PC-9 (cell line): ENCODE measurements at regions of chr5 and their contacts with region 1.

Region 1: GRCh38 chr5:180291943-180292831 is at the start of gene MAPK9:
- DNase-seq: peak; percentile 60 to 85
- H3K4me3 ChIP-seq: peak within 1 kb of the TSS; percentile 88
- H3K27ac ChIP-seq: 0 out of 2 replicates have a peak within 1 kb of the TSS, but pooled peaks have one; percentile 31
- H3K4me1 ChIP-seq: peaks cover 22% of the 10 kb centered on the region
- H3K27me3 ChIP-seq: no peaks in the 10 kb centered on the region
- CTCF ChIP-seq: no peak
- total RNA-seq, gene MAPK9: 48.8 and 54.0 TPM in 2 replicates

Region 2: DNA sequence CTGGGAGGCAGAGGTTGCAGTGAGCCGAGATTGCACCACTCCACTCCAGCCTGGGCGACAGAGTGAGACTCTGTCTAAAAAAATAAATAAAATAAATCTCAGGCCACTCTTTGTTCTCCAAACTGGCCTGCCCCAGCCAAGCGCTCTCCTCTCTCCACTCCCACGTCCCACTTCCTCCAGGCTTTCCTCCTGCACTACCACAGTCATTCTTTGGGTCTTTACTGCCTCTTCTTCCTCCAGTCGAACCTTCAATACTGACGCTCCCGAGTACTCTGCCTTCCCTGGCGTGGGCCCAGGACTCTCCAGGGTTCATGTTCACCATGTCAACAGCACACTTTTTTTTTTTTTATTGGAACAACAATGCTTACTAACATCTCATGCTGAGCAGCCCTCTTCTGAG is 244.5 kb before region 1 on chr5:
- CTCF ChIA-PET with region 1: no interaction called
- POLR2A ChIA-PET with region 1: no interaction called
- intact Hi-C with region 1: no loop called
- DNase-seq: no peak
- H3K4me3 ChIP-seq: no peak overlapping the region
- H3K27ac ChIP-seq: no peak overlapping the region
- H3K4me1 ChIP-seq: no peaks in the 10 kb centered on the region
- H3K27me3 ChIP-seq: no peaks in the 10 kb centered on the region
- CTCF ChIP-seq: no peak

Region 3: GRCh38 chr5:180090098-180090768 is 202.0 kb before region 1 on chr5:
- CTCF ChIA-PET with region 1: interaction called, 13 read pairs
- POLR2A ChIA-PET with region 1: no interaction called
- intact Hi-C with region 1: no loop called
- DNase-seq: peak in 1 of 2 experiments; percentile 84
- H3K4me3 ChIP-seq: peak overlapping the region; percentile 41; the same call in 1 of the 2 replicates
- H3K27ac ChIP-seq: no peak overlapping the region
- H3K4me1 ChIP-seq: peaks cover 8% of the 10 kb centered on the region
- H3K27me3 ChIP-seq: no peaks in the 10 kb centered on the region
- CTCF ChIP-seq: peak; percentile 82

Region 4: DNA sequence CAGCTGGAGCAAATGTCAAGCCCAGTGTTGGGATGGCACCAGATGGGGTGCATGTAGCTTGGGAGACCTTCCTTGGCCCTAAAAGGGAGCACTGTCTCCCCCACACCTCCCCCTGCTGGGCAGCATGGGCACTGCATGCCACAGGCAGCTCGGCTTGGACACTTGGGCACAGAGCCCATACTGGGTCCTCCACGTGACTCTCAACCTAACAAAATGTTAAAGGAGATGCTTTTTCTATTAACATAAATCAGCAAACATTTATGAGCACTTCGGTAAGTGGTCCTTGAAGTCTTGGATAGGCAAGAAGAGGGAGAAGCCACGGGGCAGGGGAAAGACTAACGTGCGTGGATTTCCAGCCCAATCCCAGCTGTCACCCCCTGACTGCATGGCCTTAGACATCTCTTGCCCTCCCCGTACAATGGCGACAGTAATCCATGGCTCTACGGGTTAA is 23.6 kb after region 1 on chr5:
- CTCF ChIA-PET with region 1: interaction called, 6 read pairs
- POLR2A ChIA-PET with region 1: no interaction called
- intact Hi-C with region 1: loop called (anchors 1 kb)
- DNase-seq: peak; percentile 43 to 73
- H3K4me3 ChIP-seq: no peak overlapping the region
- H3K27ac ChIP-seq: no peak overlapping the region
- H3K4me1 ChIP-seq: no peaks in the 10 kb centered on the region
- H3K27me3 ChIP-seq: no peaks in the 10 kb centered on the region
- CTCF ChIP-seq: peak; percentile 98

Region 5: GRCh38 chr5:180353048-180353979 is 61.1 kb after region 1 on chr5 and contains the start of gene GFPT2:
- CTCF ChIA-PET with region 1: no interaction called
- POLR2A ChIA-PET with region 1: no interaction called
- intact Hi-C with region 1: loop called (anchors 1 kb)
- DNase-seq: peak; percentile 58 to 86
- H3K4me3 ChIP-seq: peak within 1 kb of the TSS; percentile 88
- H3K27ac ChIP-seq: no peak within 1 kb of the TSS
- H3K4me1 ChIP-seq: no peaks in the 10 kb centered on the region; the same call in 1 of the 2 replicates
- H3K27me3 ChIP-seq: no peaks in the 10 kb centered on the region
- CTCF ChIP-seq: no peak
- total RNA-seq, gene GFPT2: 22.5 and 24.4 TPM in 2 replicates

Region 6: DNA sequence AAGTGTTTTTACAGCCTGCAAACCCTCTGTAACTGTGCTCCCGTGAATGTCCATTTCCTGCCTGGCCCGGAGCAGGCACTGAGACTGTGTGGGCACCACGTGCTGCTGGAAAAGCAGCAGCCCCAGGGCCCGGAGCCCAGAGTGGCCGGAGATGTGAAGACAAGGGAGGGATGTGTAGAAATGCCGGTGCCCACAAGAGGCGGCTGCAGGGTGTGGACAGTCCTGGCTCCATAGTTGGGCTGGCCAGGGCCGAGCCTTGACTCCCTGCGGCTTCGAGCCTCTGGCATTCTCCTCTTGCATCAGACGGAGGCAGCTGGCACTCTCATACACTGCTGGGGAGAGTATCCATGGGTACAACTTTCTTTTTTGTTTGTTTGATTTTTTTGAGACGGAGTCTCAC is 74.1 kb after region 1 on chr5:
- CTCF ChIA-PET with region 1: no interaction called
- POLR2A ChIA-PET with region 1: no interaction called
- intact Hi-C with region 1: no loop called
- DNase-seq: no peak
- H3K4me3 ChIP-seq: no peak overlapping the region
- H3K27ac ChIP-seq: no peak overlapping the region
- H3K4me1 ChIP-seq: no peaks in the 10 kb centered on the region
- H3K27me3 ChIP-seq: no peaks in the 10 kb centered on the region
- CTCF ChIP-seq: no peak

Region 7: GRCh38 chr5:180470966-180471582 is 178.9 kb after region 1 on chr5:
- CTCF ChIA-PET with region 1: interaction called, 10 read pairs
- POLR2A ChIA-PET with region 1: interaction called, 16 read pairs
- intact Hi-C with region 1: loop called (anchors 1 kb)
- DNase-seq: peak in 1 of 2 experiments; percentile 63
- H3K4me3 ChIP-seq: no peak overlapping the region
- H3K27ac ChIP-seq: no peak overlapping the region
- H3K4me1 ChIP-seq: no peaks in the 10 kb centered on the region; the same call in 1 of the 2 replicates
- H3K27me3 ChIP-seq: no peaks in the 10 kb centered on the region
- CTCF ChIP-seq: peak; percentile 98

Region 8: DNA sequence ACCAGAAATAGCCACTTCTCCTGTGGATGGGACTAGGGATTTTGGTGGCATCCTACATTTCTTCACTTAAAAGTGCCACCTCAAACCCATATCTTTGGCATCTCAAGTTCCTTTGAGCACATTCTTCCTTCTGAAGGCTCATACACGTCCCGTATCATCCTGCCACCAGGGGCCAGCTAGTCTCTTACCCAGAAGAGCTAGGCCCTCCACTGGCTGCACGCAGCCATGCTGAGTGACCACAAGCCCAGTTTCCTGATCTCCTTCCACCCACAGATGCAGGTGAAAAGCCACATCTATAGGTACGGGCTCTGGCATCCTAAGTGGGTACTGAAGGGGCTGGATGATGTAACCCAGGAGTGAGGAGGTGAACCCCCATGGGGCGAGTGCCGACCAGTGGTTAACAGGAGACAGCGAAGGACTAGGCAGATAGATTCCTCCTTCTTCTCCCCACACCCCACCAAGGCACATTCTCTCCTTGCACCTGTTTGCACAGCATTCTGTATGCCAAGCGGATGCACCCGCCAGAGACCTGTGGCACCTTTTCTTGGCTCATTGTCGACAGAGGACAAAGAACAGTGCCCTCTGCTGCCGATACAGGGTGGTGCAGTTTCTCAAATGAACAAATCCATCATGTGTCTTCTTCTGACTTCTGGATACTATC is 313.5 kb after region 1 on chr5:
- CTCF ChIA-PET with region 1: interaction called, 10 read pairs
- POLR2A ChIA-PET with region 1: interaction called, 3 read pairs
- intact Hi-C with region 1: loop called (anchors 2 kb)
- DNase-seq: peak; percentile 53 to 64
- H3K4me3 ChIP-seq: no peak overlapping the region
- H3K27ac ChIP-seq: no peak overlapping the region
- H3K4me1 ChIP-seq: no peaks in the 10 kb centered on the region
- H3K27me3 ChIP-seq: peaks cover 50% of the 10 kb centered on the region
- CTCF ChIP-seq: peak; percentile 91